Cardiac septum (tissue), 1 donor: ENCODE measurements at regions of chr15 and their contacts with region 1.

Region 1: GRCh38 chr15:91782221-91782620 is 71.3 kb upstream of the SLCO3A1 start:
- DNase-seq: no peak

Region 2: GRCh38 chr15:91801836-91802534 is 19.8 kb after region 1 on chr15:
- intact Hi-C with region 1: loop called (anchors 2 kb)
- DNase-seq: no peak